Psoas muscle (tissue), 8 donors: ENCODE measurements at regions of chr1 and their contacts with region 1.

Region 1: GRCh38 chr1:234997201-234997895 is 131.3 kb downstream of the TOMM20 start:
- DNase-seq: peak; percentile 100
- ATAC-seq: peak; percentile 90 to 95 (median 92)
- H3K4me3 ChIP-seq: peak overlapping the region; percentile 42
- H3K27ac ChIP-seq: peak overlapping the region; percentile 98
- H3K4me1 ChIP-seq: peaks cover 32% of the 10 kb centered on the region
- H3K27me3 ChIP-seq: no peaks in the 10 kb centered on the region
- CTCF ChIP-seq: no peak

Region 2: DNA sequence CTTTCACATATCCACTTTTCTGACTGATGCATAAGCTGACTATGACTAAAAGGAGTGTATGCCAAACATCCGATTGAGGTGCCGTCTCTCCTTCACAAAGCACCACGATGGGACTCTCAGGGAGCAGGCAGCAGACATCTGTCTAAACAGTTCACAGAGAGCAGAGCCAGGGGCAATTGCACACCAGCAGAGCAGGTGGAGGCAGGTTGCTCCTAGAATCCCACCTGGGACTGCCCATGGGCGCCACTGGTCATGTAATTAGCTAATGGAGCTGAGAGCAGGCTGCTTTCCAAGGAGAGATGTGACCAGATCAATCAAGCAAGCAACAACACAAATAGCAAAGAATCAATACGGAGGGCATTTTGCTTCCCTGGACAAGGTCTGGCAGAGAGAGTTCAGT is 654.6 kb before region 1 on chr1:
- intact Hi-C with region 1: no loop called
- DNase-seq: no peak
- ATAC-seq: no peak
- H3K4me3 ChIP-seq: no peak overlapping the region
- H3K27ac ChIP-seq: no peak overlapping the region
- H3K4me1 ChIP-seq: no peaks in the 10 kb centered on the region
- H3K27me3 ChIP-seq: no peaks in the 10 kb centered on the region
- CTCF ChIP-seq: no peak

Region 3: DNA sequence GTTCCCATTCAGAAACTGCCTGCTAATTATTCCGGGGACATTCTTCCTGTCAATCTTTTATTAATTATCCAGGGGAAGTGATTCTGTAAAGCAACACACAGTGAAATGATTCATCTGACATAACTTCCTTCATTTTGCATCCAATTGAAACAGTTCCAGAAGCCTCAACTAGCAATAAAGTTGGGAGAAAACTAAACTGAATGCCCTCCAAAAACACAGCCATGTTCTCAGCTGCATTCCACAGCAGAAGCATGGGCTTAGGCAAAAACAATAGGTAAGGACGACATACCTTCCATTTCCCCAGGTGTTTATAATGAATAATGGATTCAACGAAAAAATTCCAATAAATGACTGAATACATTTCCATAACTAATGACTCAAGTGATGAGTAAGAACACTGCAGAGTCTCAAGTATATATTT is 481.5 kb before region 1 on chr1:
- intact Hi-C with region 1: loop called in 1 of 2 experiments (anchors 5 kb)
- DNase-seq: no peak
- ATAC-seq: no peak
- H3K4me3 ChIP-seq: no peak overlapping the region
- H3K27ac ChIP-seq: peak overlapping the region; percentile 26
- H3K4me1 ChIP-seq: peaks cover 43% of the 10 kb centered on the region
- H3K27me3 ChIP-seq: no peaks in the 10 kb centered on the region
- CTCF ChIP-seq: no peak

Region 4: DNA sequence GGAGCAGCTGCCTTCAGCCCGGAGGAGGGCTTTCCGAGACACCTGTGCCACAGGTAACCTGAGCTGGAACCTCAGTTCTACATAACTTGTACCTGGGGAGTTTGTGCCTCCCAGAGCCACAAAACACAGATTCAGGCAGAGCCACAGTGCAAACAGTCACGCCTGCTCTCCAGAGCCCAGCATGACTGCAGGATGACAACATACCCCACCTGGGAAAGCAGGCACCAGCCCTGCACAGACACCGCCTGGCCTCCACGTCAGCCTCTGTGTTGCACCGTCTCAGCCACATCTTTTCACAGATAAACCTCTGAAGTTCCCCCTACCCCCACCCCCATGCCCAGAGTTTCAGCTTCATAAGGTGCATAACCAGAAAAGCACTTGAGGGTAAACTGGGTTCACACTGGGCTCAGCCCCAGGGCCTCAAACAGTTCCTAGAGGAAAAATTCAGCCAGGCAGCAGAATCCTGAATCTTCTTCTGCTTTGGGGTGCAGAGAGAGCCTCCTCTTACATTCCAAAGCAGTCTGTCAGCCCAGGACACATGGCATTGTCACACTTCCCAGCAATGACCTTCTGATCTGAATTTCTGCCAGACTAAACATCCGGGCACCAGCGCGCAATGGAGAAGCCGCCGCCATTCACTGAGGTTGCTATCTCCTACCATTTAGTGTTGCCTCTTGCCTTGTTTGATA is 98.2 kb before region 1 on chr1:
- intact Hi-C with region 1: loop called in 1 of 2 experiments (anchors 5 kb)
- DNase-seq: no peak
- ATAC-seq: peak; percentile 40 to 71 (median 54)
- H3K4me3 ChIP-seq: no peak overlapping the region
- H3K27ac ChIP-seq: peak overlapping the region; percentile 90
- H3K4me1 ChIP-seq: peaks cover 27% of the 10 kb centered on the region
- H3K27me3 ChIP-seq: no peaks in the 10 kb centered on the region
- CTCF ChIP-seq: no peak

Region 5: DNA sequence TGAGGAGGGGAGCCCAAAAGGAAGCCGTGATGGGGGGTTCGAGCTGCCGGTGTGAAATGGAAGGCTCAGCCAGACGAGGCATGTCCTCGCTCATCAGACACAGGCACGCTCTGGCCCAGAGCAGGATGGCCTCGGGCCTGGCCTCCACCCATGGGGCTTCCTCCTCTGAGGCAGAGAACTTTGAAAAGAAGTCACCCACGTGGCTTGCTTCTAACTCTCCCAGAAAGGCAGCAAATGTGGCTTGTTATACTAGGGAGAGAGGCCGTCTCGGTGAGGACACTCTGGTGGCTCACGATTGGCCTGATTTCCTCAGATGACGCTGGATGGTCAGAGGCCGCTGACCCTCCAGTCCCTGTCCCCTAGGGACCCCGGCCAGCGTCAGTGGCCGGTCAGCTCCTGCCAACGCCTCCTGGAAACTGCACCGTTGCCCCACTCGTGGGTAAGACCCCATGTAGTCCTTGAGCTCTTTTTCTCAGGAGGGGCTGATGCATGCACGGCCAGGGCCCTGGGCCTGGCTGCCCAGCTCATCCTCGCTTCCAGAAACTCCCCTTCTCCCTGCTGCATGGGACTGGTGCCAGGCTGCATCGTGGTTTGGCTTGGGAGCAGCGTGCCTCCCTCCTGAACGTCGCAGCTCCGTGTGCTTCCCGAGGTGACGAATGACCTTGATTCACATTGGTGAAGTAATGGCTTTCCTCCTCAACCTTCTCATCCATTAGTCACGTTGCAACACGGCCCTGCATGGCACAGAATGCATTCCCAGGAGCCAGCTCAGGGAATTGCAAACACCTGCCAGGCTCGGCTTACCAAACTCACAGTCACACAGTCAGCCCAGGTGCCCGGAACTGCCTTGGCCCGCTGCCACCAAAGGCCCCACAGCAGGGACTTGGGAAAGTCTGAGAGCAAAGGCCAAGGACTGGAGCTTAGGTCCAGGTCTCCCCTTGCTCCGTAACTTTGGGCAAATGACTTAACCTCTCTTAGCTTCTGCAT is 72.5 kb after region 1 on chr1:
- intact Hi-C with region 1: loop called (anchors 2 to 5 kb)
- DNase-seq: peak; percentile 92 to 96
- ATAC-seq: peak; percentile 47 to 61 (median 54)
- H3K4me3 ChIP-seq: no peak overlapping the region
- H3K27ac ChIP-seq: peak overlapping the region; percentile 90
- H3K4me1 ChIP-seq: peaks cover 52% of the 10 kb centered on the region
- H3K27me3 ChIP-seq: no peaks in the 10 kb centered on the region
- CTCF ChIP-seq: no peak

Region 6: GRCh38 chr1:235199441-235199840 is 202.1 kb after region 1 on chr1:
- intact Hi-C with region 1: no loop called
- DNase-seq: no peak
- ATAC-seq: no peak
- H3K4me3 ChIP-seq: no peak overlapping the region
- H3K27ac ChIP-seq: no peak overlapping the region
- H3K4me1 ChIP-seq: no peaks in the 10 kb centered on the region
- H3K27me3 ChIP-seq: no peaks in the 10 kb centered on the region
- CTCF ChIP-seq: peak; percentile 14